Activated CD8-positive, alpha-beta T cell treated with anti-CD3 and anti-CD28 coated beads for 36 hours (primary cell): ENCODE measurements at regions of chr5 and their contacts with region 1.

Region 1: GRCh38 chr5:132829742-132830435 is 558 bp downstream of the SHROOM1 start:
- DNase-seq: peak; percentile 79
- ATAC-seq: peak; percentile 83
- H3K4me3 Mint-ChIP-seq: peak overlapping the region; percentile 69
- H3K27ac Mint-ChIP-seq: no peak overlapping the region
- H3K4me1 Mint-ChIP-seq: peaks cover 7% of the 10 kb centered on the region
- H3K27me3 Mint-ChIP-seq: peaks cover 46% of the 10 kb centered on the region
- CTCF ChIP-seq: peak; percentile 92

Region 2: GRCh38 chr5:132813599-132814502 is 16.0 kb before region 1 on chr5:
- CTCF ChIA-PET with region 1: interaction called, 24 read pairs
- POLR2A ChIA-PET with region 1: interaction called, 9 read pairs
- intact Hi-C with region 1: no loop called
- DNase-seq: peak; percentile 44
- ATAC-seq: peak; percentile 62
- H3K4me3 Mint-ChIP-seq: peak overlapping the region; percentile 37
- H3K27ac Mint-ChIP-seq: no peak overlapping the region
- H3K4me1 Mint-ChIP-seq: peaks cover 7% of the 10 kb centered on the region
- H3K27me3 Mint-ChIP-seq: peaks cover 48% of the 10 kb centered on the region
- CTCF ChIP-seq: no peak

Region 3: GRCh38 chr5:132859889-132860437 is 30.1 kb after region 1 on chr5:
- CTCF ChIA-PET with region 1: interaction called, 15 read pairs
- POLR2A ChIA-PET with region 1: interaction called, 9 read pairs
- intact Hi-C with region 1: no loop called
- DNase-seq: no peak
- ATAC-seq: no peak
- H3K4me3 Mint-ChIP-seq: no peak overlapping the region
- H3K27ac Mint-ChIP-seq: no peak overlapping the region
- H3K4me1 Mint-ChIP-seq: no peaks in the 10 kb centered on the region
- H3K27me3 Mint-ChIP-seq: peaks cover 7% of the 10 kb centered on the region
- CTCF ChIP-seq: no peak

Region 4: DNA sequence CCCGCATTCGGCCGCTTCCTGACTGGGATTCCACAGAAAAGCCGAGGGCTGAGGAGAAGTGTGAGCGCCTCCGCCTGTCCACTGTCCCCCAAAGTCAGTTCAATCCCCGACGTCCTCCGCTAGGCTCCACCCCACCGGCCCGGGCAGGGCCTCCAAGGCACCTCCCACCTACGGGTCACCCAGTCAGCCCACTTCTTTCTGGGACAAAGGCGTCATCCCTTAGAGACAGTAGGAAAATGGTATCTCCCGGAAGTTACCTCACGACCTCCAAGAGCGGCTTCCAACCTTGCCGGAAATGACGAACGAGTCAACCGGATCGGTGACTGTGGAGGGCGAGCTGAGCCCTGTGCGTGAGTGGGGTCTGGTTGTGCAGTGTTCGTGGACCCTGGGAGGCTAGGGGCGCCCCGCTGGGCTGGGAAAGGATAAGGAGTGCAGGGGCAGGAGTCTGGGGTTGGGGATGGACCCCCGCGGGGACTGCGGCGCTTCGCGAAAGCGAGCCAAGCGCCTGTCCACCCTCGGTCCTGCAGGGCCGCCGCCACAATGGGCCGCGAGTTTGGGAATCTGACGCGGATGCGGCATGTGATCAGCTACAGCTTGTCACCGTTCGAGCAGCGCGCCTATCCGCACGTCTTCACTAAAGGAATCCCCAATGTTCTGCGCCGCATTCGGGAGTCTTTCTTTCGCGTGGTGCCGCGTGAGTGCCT is 36.6 kb after region 1 on chr5 and contains the starts of genes GDF9 and UQCRQ:
- CTCF ChIA-PET with region 1: interaction called, 15 read pairs
- POLR2A ChIA-PET with region 1: interaction called, 9 read pairs
- intact Hi-C with region 1: no loop called
- DNase-seq: peak; percentile 95
- ATAC-seq: peak; percentile 99
- H3K4me3 Mint-ChIP-seq: peak within 1 kb of the TSS; percentile 97
- H3K27ac Mint-ChIP-seq: peak within 1 kb of the TSS; percentile 100
- H3K4me1 Mint-ChIP-seq: peaks cover 29% of the 10 kb centered on the region
- H3K27me3 Mint-ChIP-seq: no peaks in the 10 kb centered on the region
- CTCF ChIP-seq: no peak
- total RNA-seq, gene GDF9: 0.90 to 0.94 TPM
- total RNA-seq, gene UQCRQ: 558 to 566 TPM

Region 5: DNA sequence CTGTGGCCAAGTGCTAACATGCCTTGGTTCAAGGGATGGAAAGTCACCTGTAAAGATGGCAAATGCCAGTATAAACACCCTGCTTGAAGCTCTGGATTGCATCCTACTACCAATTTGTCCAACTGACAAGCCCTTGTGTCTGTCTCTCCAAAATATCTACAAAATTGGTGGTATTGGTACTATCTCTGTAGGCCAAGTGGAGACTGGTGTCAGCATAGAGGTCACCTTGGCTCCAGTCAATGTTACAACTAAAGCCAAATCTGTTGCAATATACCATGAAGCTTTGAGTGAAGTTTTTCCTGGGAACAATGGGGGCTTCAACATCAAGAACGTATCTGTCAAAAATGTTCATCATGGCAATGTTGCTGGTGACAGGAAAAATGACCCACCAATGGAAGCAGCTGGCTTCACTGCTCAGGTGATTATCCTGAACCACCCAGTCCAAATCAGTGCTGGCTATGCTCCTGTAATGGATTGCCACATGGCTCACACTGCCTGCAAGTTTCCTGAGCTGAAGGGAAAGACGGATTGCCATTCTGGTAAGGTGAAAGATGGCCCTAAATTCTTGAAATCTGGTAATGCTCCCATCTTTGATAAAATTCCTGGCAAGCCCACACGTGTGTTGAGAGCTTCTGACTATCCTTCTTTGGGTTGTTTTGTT is 113.6 kb after region 1 on chr5:
- CTCF ChIA-PET with region 1: no interaction called
- POLR2A ChIA-PET with region 1: no interaction called
- intact Hi-C with region 1: no loop called
- DNase-seq: no peak
- ATAC-seq: no peak
- H3K4me3 Mint-ChIP-seq: no peak overlapping the region
- H3K27ac Mint-ChIP-seq: no peak overlapping the region
- H3K4me1 Mint-ChIP-seq: peaks cover 33% of the 10 kb centered on the region
- H3K27me3 Mint-ChIP-seq: no peaks in the 10 kb centered on the region
- CTCF ChIP-seq: no peak